HepG2 (cell line): ENCODE measurements at regions of chr15 and their contacts with region 1.

Region 1: GRCh38 chr15:101528108-101528916 is 38.8 kb upstream of the PCSK6 start:
- DNase-seq: peak; percentile 97
- ATAC-seq: peak; percentile 91
- H3K4me3 ChIP-seq: peak overlapping the region; percentile 39 to 74 (median 54); a peak in 5 of 6 replicates
- H3K27ac ChIP-seq: peak overlapping the region; percentile 98
- H3K4me1 ChIP-seq: peaks cover 90% of the 10 kb centered on the region
- H3K27me3 ChIP-seq: no peaks in the 10 kb centered on the region
- CTCF ChIP-seq: no peak
- EP300 ChIP-seq: peak in 1 of 2 experiments; percentile 97; a peak in 2 of 4 replicates
- POLR2A ChIP-seq: peak; percentile 61 to 65; a peak in 3 of 4 replicates
- RAD21 ChIP-seq: no peak; the same call in none of the 2 replicates

Region 2: GRCh38 chr15:100771746-100772145 is 756.6 kb before region 1 on chr15:
- CTCF ChIA-PET with region 1: no interaction called
- POLR2A ChIA-PET with region 1: no interaction called
- in situ Hi-C with region 1: no loop called
- intact Hi-C with region 1: no loop called
- DNase-seq: no peak
- ATAC-seq: no peak
- H3K4me3 ChIP-seq: no peak overlapping the region
- H3K27ac ChIP-seq: no peak overlapping the region
- H3K4me1 ChIP-seq: peaks cover 6% of the 10 kb centered on the region
- H3K27me3 ChIP-seq: peaks cover 1 to 42% of the 10 kb centered on the region in 2 experiments; a peak in 4 of 5 replicates
- CTCF ChIP-seq: no peak
- EP300 ChIP-seq: no peak
- POLR2A ChIP-seq: no peak
- RAD21 ChIP-seq: no peak

Region 3: DNA sequence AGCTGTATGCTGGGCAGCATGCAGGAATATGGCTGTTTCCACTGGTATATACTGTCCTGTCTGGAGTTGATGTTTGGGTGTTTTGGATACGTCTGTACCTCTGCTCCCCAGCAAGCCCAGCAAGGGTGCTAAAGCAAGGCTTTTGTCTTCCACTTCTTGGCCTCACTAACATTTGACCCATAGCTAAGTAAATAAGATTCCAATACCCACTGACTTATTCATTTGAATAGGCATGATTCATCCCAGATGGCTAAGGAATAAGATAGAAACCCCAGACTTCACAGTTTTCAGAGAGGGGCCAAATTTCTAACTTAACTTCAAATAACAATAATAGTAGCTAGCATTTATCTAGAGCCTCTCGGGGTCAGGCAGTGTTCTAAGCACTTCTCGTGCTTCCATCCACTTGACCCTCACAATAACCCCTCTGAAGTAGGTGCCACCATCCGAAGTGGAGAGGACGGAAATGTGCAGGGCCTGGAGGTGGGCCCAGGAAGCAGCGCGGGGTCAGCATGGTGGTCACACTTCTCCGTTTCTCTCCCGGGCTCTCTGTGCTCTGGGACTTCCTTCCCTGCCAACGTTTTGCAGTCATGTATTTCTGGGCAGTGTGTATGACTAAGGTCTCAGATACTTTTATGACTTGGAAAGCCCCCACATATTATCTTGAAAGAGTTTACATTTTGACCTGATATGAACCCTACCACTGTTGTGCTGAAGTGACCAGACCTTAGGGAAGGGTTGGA is 569.8 kb before region 1 on chr15:
- CTCF ChIA-PET with region 1: no interaction called
- POLR2A ChIA-PET with region 1: no interaction called
- in situ Hi-C with region 1: no loop called
- intact Hi-C with region 1: no loop called
- DNase-seq: no peak
- ATAC-seq: no peak
- H3K4me3 ChIP-seq: no peak overlapping the region
- H3K27ac ChIP-seq: no peak overlapping the region
- H3K4me1 ChIP-seq: no peaks in the 10 kb centered on the region
- H3K27me3 ChIP-seq: peaks cover 3 to 27% of the 10 kb centered on the region in 2 experiments
- CTCF ChIP-seq: no peak
- EP300 ChIP-seq: no peak
- POLR2A ChIP-seq: no peak
- RAD21 ChIP-seq: no peak

Region 4: DNA sequence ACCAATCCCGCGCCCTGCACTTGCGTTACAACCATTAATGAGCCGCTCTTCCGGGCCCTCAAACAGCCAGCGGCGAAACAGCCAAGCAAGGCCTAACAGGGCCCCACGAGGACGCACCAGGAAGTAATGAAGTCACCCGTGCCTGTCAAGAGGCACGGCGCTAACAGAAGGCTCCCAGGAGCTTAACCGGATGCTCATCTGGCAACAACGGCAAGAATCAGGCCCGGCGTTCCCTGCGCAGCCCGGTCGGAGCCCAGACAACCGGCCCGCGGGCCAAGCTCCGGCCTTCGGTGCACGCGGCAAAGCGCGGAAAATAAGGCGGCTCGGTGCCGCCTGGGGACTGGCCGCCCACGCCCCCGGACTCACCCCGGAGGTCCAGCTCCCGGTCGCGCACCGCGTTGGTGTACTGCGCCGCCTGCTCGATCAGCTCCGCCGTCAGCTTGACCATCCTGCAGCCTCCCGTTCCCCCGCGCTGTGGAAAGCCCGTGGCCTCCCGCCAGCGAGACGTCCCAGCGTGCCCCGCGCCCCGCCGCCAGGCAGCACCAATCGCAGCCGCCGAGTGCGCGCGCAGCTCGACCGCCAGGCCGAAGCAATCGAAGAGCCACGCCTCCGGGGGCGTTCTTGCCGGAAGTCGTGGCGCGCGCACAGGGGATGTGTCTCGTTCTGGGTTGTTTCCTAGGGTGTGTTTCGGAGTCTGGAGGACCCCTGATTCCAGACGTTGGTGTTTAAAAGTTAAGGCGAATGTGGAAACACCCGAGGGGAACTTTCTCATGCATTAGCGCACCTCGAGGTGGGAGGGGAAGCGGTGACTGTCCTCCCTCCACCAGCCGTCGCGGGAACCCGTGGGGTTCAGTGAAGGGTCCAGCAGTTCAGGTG is 233.3 kb before region 1 on chr15 and contains the start of gene SNRPA1:
- CTCF ChIA-PET with region 1: no interaction called
- POLR2A ChIA-PET with region 1: interaction called, 13 read pairs
- in situ Hi-C with region 1: no loop called
- intact Hi-C with region 1: no loop called
- DNase-seq: peak; percentile 84
- ATAC-seq: peak; percentile 85
- H3K4me3 ChIP-seq: peak within 1 kb of the TSS; percentile 66 to 90 (median 77)
- H3K27ac ChIP-seq: peak within 1 kb of the TSS; percentile 85
- H3K4me1 ChIP-seq: peaks cover 34% of the 10 kb centered on the region
- H3K27me3 ChIP-seq: no peaks in the 10 kb centered on the region; a peak in 1 of 5 replicates
- CTCF ChIP-seq: no peak
- EP300 ChIP-seq: peak in 1 of 2 experiments; percentile 59; a peak in 1 of 4 replicates
- POLR2A ChIP-seq: peak; percentile 79 to 81
- RAD21 ChIP-seq: no peak
- total RNA-seq, gene SNRPA1: 41.2 and 72.5 TPM in 2 replicates

Region 5: DNA sequence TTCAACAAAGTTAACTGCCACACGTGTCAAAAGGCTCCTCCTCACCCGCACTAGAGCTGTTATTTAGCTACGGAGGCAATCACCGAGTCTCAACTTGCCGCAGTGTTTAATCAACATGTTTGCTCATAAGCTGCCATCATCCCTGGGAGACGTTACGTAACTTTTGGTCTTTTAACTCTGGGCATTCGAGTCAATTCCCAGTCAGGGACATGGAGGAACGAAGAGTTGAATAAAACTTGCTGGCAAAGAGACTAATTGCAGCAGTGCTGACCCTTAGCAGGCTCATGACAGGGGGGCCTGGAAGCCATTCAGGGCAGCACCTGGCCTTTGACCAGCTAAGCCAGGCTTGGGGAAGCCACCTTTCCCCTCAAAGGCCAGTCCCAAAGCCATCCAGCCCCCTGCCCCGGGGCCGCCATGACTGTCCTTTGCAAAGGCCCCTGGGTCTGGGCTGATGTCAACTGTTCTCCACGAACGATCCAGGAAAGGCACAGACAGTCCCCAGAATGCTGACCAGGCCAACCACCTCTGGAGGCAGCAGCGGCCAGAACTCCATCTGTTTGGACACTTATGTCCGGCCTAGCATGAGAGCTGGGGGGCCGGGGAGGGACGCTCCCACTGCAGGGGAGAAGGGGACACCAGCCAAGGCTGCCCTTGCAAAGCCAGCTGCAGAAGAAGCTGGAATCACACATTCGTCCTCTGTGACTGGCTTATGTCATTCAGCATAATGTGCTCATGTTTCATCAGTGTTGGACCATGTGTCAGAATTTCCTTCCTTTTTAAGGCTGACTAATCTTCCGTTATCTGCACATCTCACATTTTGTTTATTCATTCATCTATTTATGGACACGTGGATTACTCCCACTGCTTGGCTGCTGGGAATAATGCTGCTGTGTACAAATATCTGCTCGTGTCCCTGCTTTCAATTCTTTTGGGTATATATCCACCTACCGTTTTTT is 82.5 kb before region 1 on chr15:
- CTCF ChIA-PET with region 1: no interaction called
- POLR2A ChIA-PET with region 1: interaction called, 23 read pairs
- in situ Hi-C with region 1: no loop called
- intact Hi-C with region 1: no loop called
- DNase-seq: peak; percentile 87
- ATAC-seq: peak; percentile 53
- H3K4me3 ChIP-seq: peak overlapping the region in 1 of 3 experiments; percentile 32; a peak in 2 of 6 replicates
- H3K27ac ChIP-seq: peak overlapping the region; percentile 86
- H3K4me1 ChIP-seq: peaks cover 71% of the 10 kb centered on the region
- H3K27me3 ChIP-seq: no peaks in the 10 kb centered on the region
- CTCF ChIP-seq: no peak
- EP300 ChIP-seq: peak in 1 of 2 experiments; percentile 87; a peak in 2 of 4 replicates
- POLR2A ChIP-seq: peak; percentile 32 to 46; a peak in 2 of 4 replicates
- RAD21 ChIP-seq: no peak

Region 6: GRCh38 chr15:101501703-101502373 is 26.5 kb before region 1 on chr15:
- CTCF ChIA-PET with region 1: no interaction called
- POLR2A ChIA-PET with region 1: interaction called, 35 read pairs
- in situ Hi-C with region 1: no loop called
- intact Hi-C with region 1: no loop called
- DNase-seq: peak; percentile 66
- ATAC-seq: peak; percentile 88
- H3K4me3 ChIP-seq: peak overlapping the region; percentile 53 to 73 (median 62)
- H3K27ac ChIP-seq: no peak overlapping the region
- H3K4me1 ChIP-seq: peaks cover 71% of the 10 kb centered on the region
- H3K27me3 ChIP-seq: no peaks in the 10 kb centered on the region; a peak in 1 of 5 replicates
- CTCF ChIP-seq: peak; percentile 89
- EP300 ChIP-seq: no peak
- POLR2A ChIP-seq: no peak
- RAD21 ChIP-seq: peak; percentile 80

Region 7: GRCh38 chr15:101540480-101541239 is 12.3 kb after region 1 on chr15:
- CTCF ChIA-PET with region 1: no interaction called
- POLR2A ChIA-PET with region 1: interaction called, 92 read pairs
- in situ Hi-C with region 1: no loop called
- intact Hi-C with region 1: loop called (anchors 1 kb)
- DNase-seq: peak; percentile 65
- ATAC-seq: peak; percentile 84
- H3K4me3 ChIP-seq: peak overlapping the region in 2 of 3 experiments; percentile 15 to 63; a peak in 3 of 6 replicates
- H3K27ac ChIP-seq: no peak overlapping the region
- H3K4me1 ChIP-seq: peaks cover 68% of the 10 kb centered on the region
- H3K27me3 ChIP-seq: no peaks in the 10 kb centered on the region
- CTCF ChIP-seq: peak; percentile 83
- EP300 ChIP-seq: no peak
- POLR2A ChIP-seq: no peak
- RAD21 ChIP-seq: peak; percentile 83

Region 8: DNA sequence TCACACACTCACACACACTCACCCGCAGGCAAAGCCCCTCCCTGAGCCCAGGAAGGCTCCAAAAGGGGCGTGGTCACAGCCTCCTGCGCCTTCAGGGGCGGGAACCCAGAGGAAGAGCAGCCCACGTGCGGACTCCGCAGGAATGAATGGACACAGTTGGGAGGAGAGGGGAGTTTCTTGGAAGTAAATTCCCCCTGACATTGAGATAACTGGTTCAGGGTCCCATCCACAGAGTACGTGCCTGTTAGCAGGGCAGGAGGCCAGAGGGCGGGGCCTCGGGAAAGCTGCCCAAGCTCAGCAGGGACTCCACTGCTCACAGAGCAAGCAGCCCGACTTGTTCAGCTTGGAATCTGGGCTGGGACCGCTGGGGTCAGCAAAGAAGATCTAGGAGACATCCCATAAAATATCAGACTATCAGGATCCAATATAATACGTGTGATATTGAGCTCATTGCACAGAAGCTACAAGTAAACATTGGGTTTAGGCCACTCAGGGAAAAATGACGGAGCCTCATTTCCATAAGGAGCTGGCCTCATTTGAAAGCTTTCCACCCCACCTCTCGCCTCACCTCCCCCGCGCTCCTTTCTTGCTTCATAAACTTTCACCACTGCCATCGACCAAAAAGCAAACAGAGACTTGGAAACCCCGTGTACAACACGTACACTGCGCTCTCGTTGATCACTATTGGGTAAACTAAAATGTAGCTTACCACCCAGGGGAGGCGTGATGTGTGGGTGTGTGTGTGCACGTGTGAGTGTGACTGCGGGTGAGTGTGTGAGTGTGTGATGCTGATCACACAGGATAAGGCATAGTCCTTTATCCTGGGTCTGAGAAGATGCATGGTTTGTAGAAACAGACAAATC is 87.9 kb after region 1 on chr15:
- CTCF ChIA-PET with region 1: no interaction called
- POLR2A ChIA-PET with region 1: interaction called, 17 read pairs
- in situ Hi-C with region 1: no loop called
- intact Hi-C with region 1: no loop called
- DNase-seq: peak; percentile 60
- ATAC-seq: peak; percentile 73
- H3K4me3 ChIP-seq: peak overlapping the region; percentile 3 to 52 (median 6); a peak in 4 of 6 replicates
- H3K27ac ChIP-seq: peak overlapping the region; percentile 76
- H3K4me1 ChIP-seq: peaks cover 92% of the 10 kb centered on the region
- H3K27me3 ChIP-seq: no peaks in the 10 kb centered on the region
- CTCF ChIP-seq: peak; percentile 10; the same call in 1 of the 2 replicates
- EP300 ChIP-seq: peak in 1 of 2 experiments; percentile 24; a peak in 1 of 4 replicates
- POLR2A ChIP-seq: peak in 1 of 2 experiments; percentile 35; a peak in 2 of 4 replicates
- RAD21 ChIP-seq: no peak

Region 9: GRCh38 chr15:101641166-101641764 is 113.0 kb after region 1 on chr15:
- CTCF ChIA-PET with region 1: no interaction called
- POLR2A ChIA-PET with region 1: interaction called, 3 read pairs
- in situ Hi-C with region 1: no loop called
- intact Hi-C with region 1: loop called (anchors 5 kb)
- DNase-seq: peak; percentile 52
- ATAC-seq: peak; percentile 59
- H3K4me3 ChIP-seq: no peak overlapping the region
- H3K27ac ChIP-seq: no peak overlapping the region
- H3K4me1 ChIP-seq: peaks cover 36% of the 10 kb centered on the region
- H3K27me3 ChIP-seq: no peaks in the 10 kb centered on the region
- CTCF ChIP-seq: peak; percentile 89
- EP300 ChIP-seq: no peak
- POLR2A ChIP-seq: no peak
- RAD21 ChIP-seq: peak; percentile 84

Region 10: GRCh38 chr15:101675796-101676582 is 147.7 kb after region 1 on chr15:
- CTCF ChIA-PET with region 1: no interaction called
- POLR2A ChIA-PET with region 1: no interaction called
- in situ Hi-C with region 1: no loop called
- intact Hi-C with region 1: no loop called
- DNase-seq: no peak
- ATAC-seq: no peak
- H3K4me3 ChIP-seq: no peak overlapping the region
- H3K27ac ChIP-seq: no peak overlapping the region
- H3K4me1 ChIP-seq: no peaks in the 10 kb centered on the region
- H3K27me3 ChIP-seq: no peaks in the 10 kb centered on the region
- CTCF ChIP-seq: no peak
- EP300 ChIP-seq: no peak
- POLR2A ChIP-seq: no peak
- RAD21 ChIP-seq: no peak